ENCODE measurements at regions of chr3 and their contacts with region 1.

Region 1: DNA sequence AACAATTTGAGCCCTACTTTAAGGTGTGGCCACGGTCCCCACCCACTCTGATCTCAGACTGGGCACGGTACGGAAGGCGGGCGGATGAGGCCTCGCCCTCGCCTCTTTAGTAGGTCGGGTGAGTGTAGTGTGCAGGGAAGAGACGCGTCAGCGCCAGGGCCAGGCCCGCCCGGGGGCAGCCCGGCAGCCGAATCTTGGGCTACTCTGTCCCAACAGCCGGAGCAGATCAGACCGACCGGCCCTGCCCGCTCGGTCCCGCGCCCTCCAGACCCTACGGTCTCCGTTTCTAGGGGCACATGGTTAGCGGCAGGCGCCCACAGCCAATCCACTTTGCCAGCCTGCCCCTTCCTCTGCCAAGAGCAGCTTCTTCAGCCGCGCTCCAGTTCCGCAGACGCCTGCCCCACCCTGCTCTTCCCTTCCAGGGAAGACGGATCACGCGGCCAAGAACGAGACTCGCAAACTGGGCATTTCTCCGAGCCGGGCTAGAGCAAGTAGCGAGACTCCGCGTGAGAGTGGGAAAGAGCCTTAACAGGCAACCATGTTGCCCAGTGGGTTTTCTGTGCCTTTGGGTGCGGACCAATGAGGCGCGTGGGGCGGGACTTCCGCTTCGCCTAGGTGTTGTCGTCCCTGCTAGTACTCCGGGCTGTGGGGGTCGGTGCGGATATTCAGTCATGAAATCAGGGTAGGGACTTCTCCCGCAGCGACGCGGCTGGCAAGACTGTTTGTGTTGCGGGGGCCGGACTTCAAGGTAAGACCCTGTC is at the start of gene RNF13:
- DNase-seq: peak; percentile 99
- H3K4me3 ChIP-seq: peak within 1 kb of the TSS; percentile 66 to 75 (median 70)
- H3K27ac ChIP-seq: peak within 1 kb of the TSS; percentile 97 to 99 (median 97)
- H3K4me1 ChIP-seq: peaks cover 0 to 57% (median 45%) of the 10 kb centered on the region in 4 donors
- H3K27me3 ChIP-seq: no peaks in the 10 kb centered on the region
- CTCF ChIP-seq: no peak
- EP300 ChIP-seq: peak in 1 of 4 donors; percentile 47
- POLR2A ChIP-seq: peak; percentile 59 to 61
- total RNA-seq, gene RNF13: 78.3 to 110 (median 94.1) TPM

Region 2: DNA sequence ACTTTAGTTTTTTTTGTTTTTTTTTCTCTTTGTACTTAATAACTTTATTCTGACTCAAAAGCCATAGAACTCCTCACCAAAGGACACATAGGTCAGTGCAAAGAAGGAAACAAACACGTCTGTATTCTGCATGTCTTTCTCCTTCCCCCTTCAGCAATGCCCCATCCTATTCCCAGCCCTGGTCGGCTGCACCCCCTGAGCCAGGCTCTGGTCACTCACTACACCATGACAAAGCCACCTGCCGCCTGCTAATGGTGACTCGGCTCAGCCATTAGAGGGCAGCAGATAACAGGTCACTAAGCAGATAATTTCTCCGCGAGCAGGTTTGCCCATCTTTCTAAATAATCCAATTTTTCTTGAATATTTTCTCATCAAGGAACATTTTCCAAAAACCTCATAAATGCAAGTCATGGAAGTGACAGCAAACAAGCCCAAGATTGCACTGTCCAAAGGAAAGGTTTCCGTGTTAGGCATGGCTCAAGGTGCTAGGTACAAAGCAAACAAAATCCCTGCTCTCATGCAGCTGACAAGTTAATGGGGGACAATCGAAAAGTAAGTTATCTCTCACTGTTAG is 300.5 kb before region 1 on chr3:
- intact Hi-C with region 1: loop called (anchors 5 kb)
- DNase-seq: peak; percentile 85
- H3K4me3 ChIP-seq: no peak overlapping the region
- H3K27ac ChIP-seq: no peak overlapping the region
- H3K4me1 ChIP-seq: peaks cover 0 to 17% (median 11%) of the 10 kb centered on the region in 4 donors
- H3K27me3 ChIP-seq: no peaks in the 10 kb centered on the region
- CTCF ChIP-seq: peak; percentile 67 to 81 (median 76)
- EP300 ChIP-seq: no peak
- POLR2A ChIP-seq: no peak

Region 3: GRCh38 chr3:149752051-149752787 is 60.6 kb before region 1 on chr3 and contains the start of gene COMMD2:
- intact Hi-C with region 1: loop called (anchors 5 kb)
- DNase-seq: peak; percentile 90
- H3K4me3 ChIP-seq: peak within 1 kb of the TSS; percentile 76 to 85 (median 81)
- H3K27ac ChIP-seq: peak within 1 kb of the TSS; percentile 81 to 89 (median 84)
- H3K4me1 ChIP-seq: peaks cover 0 to 17% (median 11%) of the 10 kb centered on the region in 4 donors
- H3K27me3 ChIP-seq: no peaks in the 10 kb centered on the region
- CTCF ChIP-seq: peak in 1 of 4 experiments; percentile 15
- EP300 ChIP-seq: no peak
- POLR2A ChIP-seq: peak; percentile 58 to 65
- total RNA-seq, gene COMMD2: 17.1 to 27.5 (median 22.6) TPM

Region 4: GRCh38 chr3:149832086-149832485 is 19.3 kb after region 1 on chr3:
- intact Hi-C with region 1: no loop called
- DNase-seq: no peak
- H3K4me3 ChIP-seq: no peak overlapping the region
- H3K27ac ChIP-seq: no peak overlapping the region
- H3K4me1 ChIP-seq: peaks cover 0 to 16% (median 6%) of the 10 kb centered on the region in 4 donors
- H3K27me3 ChIP-seq: no peaks in the 10 kb centered on the region
- CTCF ChIP-seq: no peak
- EP300 ChIP-seq: no peak
- POLR2A ChIP-seq: no peak

Region 5: DNA sequence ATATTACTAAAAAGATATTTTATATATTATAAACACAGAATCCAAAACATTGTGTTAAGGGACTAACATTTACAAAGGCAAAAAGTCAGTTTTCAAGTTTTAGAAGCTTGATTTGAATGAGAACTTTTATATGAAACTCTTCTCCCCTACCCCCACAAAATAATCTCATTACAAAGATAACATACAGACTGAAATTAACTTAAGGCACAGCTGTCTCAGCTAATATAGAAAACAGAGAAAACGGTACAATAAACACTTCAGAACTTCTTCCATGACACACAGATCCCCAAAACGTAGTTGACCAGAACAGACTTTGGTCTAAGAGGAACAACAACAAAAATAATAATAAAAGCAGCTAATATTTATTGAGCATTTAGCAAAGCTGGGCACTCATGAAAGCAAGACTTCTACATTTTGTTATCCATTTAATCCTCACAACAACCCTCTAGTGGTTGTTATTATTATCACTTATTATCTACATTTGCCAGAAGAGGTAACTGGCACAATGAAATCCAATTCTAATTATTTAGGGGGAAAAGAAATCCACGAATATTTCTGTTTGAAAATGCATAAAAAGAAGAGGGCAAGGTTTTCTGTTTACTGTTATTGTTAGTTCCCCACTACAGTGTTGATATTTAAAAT is 89.8 kb after region 1 on chr3:
- intact Hi-C with region 1: no loop called
- DNase-seq: no peak
- H3K4me3 ChIP-seq: no peak overlapping the region
- H3K27ac ChIP-seq: no peak overlapping the region
- H3K4me1 ChIP-seq: peaks cover 0 to 25% (median 17%) of the 10 kb centered on the region in 4 donors
- H3K27me3 ChIP-seq: no peaks in the 10 kb centered on the region
- CTCF ChIP-seq: peak in 1 of 4 experiments; percentile 17
- EP300 ChIP-seq: no peak
- POLR2A ChIP-seq: no peak